ENCODE measurements at regions of chr6 and their contacts with region 1.

Region 1: GRCh38 chr6:3456755-3457466 is at the start of gene SLC22A23:
- DNase-seq: peak; percentile 53 to 76
- ATAC-seq: peak; percentile 77 to 90 (median 80)
- H3K4me3 ChIP-seq: peak within 1 kb of the TSS; percentile 23 to 72 (median 68)
- H3K27ac ChIP-seq: peak within 1 kb of the TSS; percentile 25 to 67 (median 49)
- H3K4me1 ChIP-seq: peaks cover 11 to 43% (median 25%) of the 10 kb centered on the region in 9 donors
- H3K27me3 ChIP-seq: peaks cover 0 to 87% (median 14%) of the 10 kb centered on the region in 7 donors
- CTCF ChIP-seq: peak; percentile 62 to 81 (median 77)
- total RNA-seq, gene SLC22A23: 4.4 to 7.8 (median 5.5) TPM

Region 2: GRCh38 chr6:3251462-3252314 is 205.2 kb before region 1 on chr6:
- intact Hi-C with region 1: no loop called
- DNase-seq: peak; percentile 85
- ATAC-seq: peak; percentile 73 to 90 (median 83)
- H3K4me3 ChIP-seq: peak overlapping the region in 2 of 10 donors; percentile 16 to 27
- H3K27ac ChIP-seq: no peak overlapping the region
- H3K4me1 ChIP-seq: peaks cover 0 to 40% (median 15%) of the 10 kb centered on the region in 9 donors
- H3K27me3 ChIP-seq: peaks cover 0 to 39% (median 13%) of the 10 kb centered on the region in 7 donors
- CTCF ChIP-seq: peak; percentile 88 to 98 (median 97)

Region 3: DNA sequence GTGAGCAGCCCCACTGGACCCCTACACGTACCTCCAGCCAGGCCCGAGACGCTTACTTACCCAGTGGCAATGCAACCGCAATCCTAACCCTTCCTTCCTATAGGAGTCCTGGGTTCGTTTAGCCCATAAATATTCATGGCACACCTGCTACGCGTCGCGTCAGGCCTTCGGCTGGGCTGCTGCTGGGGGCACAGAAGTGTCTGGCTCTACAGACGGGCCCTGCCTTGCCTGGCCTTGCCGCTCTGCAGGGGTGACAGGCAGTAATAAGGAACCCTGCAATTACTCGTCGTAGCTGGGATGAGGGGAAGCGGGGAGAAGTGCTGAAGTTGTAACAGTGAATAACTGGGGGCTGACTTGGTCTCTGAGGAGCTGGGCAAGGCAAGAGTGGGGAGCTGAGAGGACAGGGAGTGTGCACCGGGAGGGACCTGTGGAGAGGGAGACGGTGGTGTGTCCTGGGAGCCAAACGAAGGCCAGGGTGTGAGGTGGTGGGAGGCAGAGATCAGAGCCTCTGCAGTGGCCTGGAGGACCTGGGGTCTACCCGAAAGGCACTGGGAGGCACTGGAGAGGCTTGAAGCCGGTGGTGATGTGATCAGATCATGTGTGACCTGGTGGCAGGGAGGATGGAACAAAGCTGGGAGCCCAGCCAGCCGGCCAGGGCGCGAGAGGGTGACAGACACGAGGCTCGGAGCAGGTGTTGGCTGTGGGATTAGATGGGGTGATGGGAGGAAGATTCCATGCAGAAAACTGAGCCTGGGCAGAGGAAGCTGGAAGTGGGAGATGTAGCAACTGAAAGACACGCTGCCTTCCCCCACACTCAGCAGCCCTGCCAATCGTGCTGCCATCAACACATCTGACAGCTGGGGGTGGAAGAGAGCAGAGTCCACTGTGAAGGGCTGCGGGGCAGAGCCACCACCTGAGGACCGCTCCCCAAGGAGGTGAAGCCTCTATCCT is 161.7 kb before region 1 on chr6:
- intact Hi-C with region 1: loop called in 2 of 10 experiments (anchors 5 to 10 kb)
- DNase-seq: no peak
- ATAC-seq: peak in 7 of 8 donors; percentile 25 to 80 (median 41)
- H3K4me3 ChIP-seq: no peak overlapping the region
- H3K27ac ChIP-seq: no peak overlapping the region
- H3K4me1 ChIP-seq: peaks cover 0 to 30% (median 5%) of the 10 kb centered on the region in 9 donors
- H3K27me3 ChIP-seq: peaks cover 0 to 6% (median 0%) of the 10 kb centered on the region in 7 donors
- CTCF ChIP-seq: peak in 2 of 9 donors; percentile 14 to 26

Region 4: DNA sequence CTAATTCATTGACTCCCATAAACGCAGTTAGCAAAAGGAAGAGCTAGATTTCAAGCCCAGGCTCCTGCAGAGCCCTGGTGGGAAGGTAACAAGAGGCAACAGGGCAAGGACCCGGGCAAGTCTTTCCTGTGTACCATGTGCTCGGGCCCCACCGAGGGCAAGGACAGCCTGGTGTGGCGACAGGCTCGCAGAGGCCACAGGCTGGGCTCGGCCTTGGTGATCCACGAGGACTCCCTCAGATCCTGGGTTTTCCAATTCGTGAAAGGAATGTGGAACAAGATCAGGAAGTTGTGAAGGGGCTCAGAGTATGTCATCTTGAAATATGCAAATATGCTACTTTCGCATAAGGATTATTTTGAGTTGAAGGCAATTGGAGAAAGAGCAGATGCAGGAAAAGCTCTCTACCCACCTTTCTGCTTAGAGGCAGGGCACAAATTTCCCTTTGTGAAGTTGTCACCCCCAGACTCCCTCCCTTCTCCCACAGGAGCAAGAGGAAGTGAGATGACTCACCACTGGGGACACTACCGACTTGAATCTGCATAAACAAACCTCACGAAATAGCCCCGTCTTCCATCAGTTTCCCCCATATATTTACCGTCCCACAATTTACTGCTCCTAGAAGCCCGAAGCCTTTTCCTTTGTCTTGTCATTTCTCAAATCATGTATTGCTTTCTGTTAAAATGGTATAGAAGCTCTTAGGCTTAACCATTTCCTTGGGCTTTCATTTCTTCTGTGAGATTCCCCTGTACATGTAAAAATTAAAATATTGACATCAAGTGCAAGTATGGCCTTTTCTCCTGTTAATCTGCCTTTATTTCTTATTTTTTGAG is 119.2 kb before region 1 on chr6:
- intact Hi-C with region 1: loop called in 1 of 10 experiments (anchors 10 kb)
- DNase-seq: no peak
- ATAC-seq: peak in 2 of 8 donors; percentile 35 to 48
- H3K4me3 ChIP-seq: no peak overlapping the region
- H3K27ac ChIP-seq: peak overlapping the region in 1 of 10 donors; percentile 32
- H3K4me1 ChIP-seq: peaks cover 0 to 40% (median 14%) of the 10 kb centered on the region in 9 donors
- H3K27me3 ChIP-seq: no peaks in the 10 kb centered on the region
- CTCF ChIP-seq: peak in 1 of 9 donors; percentile 9

Region 5: DNA sequence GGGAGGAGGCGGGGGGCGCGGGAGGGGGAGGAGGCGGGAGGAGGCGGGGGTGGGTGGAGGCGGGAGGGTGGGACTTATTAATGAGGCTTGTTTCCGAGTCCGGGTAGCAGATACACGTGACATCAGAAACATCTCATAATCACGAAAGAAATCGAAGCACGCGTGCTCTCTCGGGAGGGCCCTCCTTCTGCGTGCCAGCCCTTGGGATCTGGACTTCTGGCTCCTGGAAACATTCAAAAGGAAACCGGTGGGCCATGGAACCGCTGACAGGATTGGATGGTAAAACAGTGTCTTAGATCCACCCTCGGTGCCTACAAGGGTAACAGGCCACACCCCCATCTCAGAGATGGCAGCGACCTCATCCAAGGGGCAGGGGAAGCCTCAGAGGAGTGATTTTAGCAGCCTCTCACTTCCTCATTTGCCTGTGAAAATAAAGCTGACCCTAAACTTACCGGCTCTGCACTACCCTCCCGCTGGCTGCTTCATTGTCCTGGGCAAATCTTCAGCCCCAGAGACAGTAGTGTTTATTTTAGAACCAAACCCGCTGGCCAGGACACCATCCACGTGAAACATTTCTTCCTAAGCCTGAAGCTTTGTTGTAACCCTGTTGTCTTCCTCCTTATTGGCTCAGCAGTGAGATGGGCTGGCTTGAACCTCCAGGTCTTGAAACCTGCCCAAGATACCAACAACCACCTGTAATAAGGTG is 100.7 kb before region 1 on chr6:
- intact Hi-C with region 1: loop called in 1 of 10 experiments (anchors 10 kb)
- DNase-seq: peak; percentile 59 to 69
- ATAC-seq: peak; percentile 62 to 81 (median 76)
- H3K4me3 ChIP-seq: peak overlapping the region in 9 of 10 donors; percentile 25 to 54 (median 49)
- H3K27ac ChIP-seq: peak overlapping the region; percentile 80 to 94 (median 89)
- H3K4me1 ChIP-seq: peaks cover 0 to 32% (median 25%) of the 10 kb centered on the region in 9 donors
- H3K27me3 ChIP-seq: no peaks in the 10 kb centered on the region
- CTCF ChIP-seq: no peak

Region 6: GRCh38 chr6:3410385-3411360 is 46.2 kb before region 1 on chr6:
- intact Hi-C with region 1: no loop called
- DNase-seq: peak; percentile 19 to 70
- ATAC-seq: peak in 5 of 8 donors; percentile 29 to 64 (median 54)
- H3K4me3 ChIP-seq: no peak overlapping the region
- H3K27ac ChIP-seq: no peak overlapping the region
- H3K4me1 ChIP-seq: peaks cover 0 to 5% (median 0%) of the 10 kb centered on the region in 9 donors
- H3K27me3 ChIP-seq: no peaks in the 10 kb centered on the region
- CTCF ChIP-seq: peak; percentile 39 to 80 (median 70)